PC-9 (cell line): ENCODE measurements at regions of chr12 and their contacts with region 1.

Region 1: GRCh38 chr12:3202734-3203446 is 125.7 kb downstream of the TSPAN9 start:
- DNase-seq: peak in 1 of 2 experiments; percentile 58
- H3K4me3 ChIP-seq: no peak overlapping the region
- H3K27ac ChIP-seq: no peak overlapping the region
- H3K4me1 ChIP-seq: no peaks in the 10 kb centered on the region
- H3K27me3 ChIP-seq: peaks cover 23% of the 10 kb centered on the region; the same call in 1 of the 2 replicates
- CTCF ChIP-seq: peak; percentile 99

Region 2: GRCh38 chr12:3275171-3276041 is 72.5 kb after region 1 on chr12:
- CTCF ChIA-PET with region 1: interaction called, 3 read pairs
- POLR2A ChIA-PET with region 1: no interaction called
- intact Hi-C with region 1: loop called (anchors 2 kb)
- DNase-seq: peak; percentile 49 to 81
- H3K4me3 ChIP-seq: no peak overlapping the region
- H3K27ac ChIP-seq: no peak overlapping the region
- H3K4me1 ChIP-seq: peaks cover 14% of the 10 kb centered on the region
- H3K27me3 ChIP-seq: 0 out of 2 replicates have a peak, but pooled peaks cover 12% of the 10 kb centered on the region
- CTCF ChIP-seq: peak; percentile 98